ENCODE measurements at regions of chr18 and their contacts with region 1.

Region 1: DNA sequence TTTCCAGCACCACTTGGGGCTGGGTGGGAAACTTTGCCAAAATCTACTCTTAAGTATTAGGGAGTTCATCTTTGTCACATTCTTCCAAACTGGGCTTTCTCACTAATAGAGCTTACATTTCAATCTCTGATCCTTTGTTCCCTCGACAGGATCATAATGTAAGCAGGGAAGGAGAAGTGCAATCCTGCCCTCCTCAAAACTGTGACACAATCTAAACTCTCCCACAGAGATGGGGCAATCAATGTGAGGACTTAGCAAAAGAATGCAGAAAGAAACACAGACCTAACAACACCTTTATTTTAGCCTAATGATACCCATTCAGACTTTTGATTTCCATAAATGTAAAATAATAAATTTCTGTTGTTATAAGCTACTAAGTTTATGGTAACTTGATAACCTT is 40.8 kb downstream of the DSEL start:
- DNase-seq: no peak
- ATAC-seq: no peak

Region 2: GRCh38 chr18:67568166-67568565 is 92.5 kb after region 1 on chr18:
- intact Hi-C with region 1: loop called in 1 of 2 experiments (anchors 5 kb)
- DNase-seq: no peak
- ATAC-seq: no peak

Measured in left cardiac atrium (tissue), 4 donors.